AG04450 (cell line): ENCODE measurements at regions of chr12 and their contacts with region 1.

Region 1: GRCh38 chr12:96285158-96285557 is 91.0 kb downstream of the ELK3 start:
- DNase-seq: no peak
- H3K4me3 ChIP-seq: no peak overlapping the region
- H3K27ac ChIP-seq: no peak overlapping the region
- H3K27me3 ChIP-seq: no peaks in the 10 kb centered on the region
- CTCF ChIP-seq: no peak

Region 2: DNA sequence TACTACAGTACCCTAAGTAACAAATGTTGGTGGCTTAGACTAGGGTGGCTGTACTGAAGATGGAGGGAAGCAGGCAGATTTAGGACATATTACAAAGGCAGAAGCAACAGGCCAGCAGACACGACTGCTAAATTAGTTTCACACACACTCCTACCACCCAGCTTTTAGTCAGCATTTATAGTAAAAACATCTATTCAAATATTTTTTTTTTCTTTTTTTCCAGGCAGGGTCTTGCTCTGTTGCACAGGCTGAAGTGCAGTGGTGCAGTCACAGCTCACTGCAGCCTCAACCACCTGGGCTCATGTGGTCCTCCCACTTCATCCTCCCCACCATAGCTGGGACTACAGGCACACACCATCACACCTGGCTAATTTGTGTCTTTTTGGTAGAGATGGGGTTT is 42.2 kb after region 1 on chr12:
- CTCF ChIA-PET with region 1: interaction called, 11 read pairs
- POLR2A ChIA-PET with region 1: no interaction called
- DNase-seq: no peak
- H3K4me3 ChIP-seq: no peak overlapping the region
- H3K27ac ChIP-seq: no peak overlapping the region
- H3K27me3 ChIP-seq: no peaks in the 10 kb centered on the region
- CTCF ChIP-seq: no peak